Thyroid gland (tissue), 4 donors: ENCODE measurements at regions of chr6 and their contacts with region 1.

Region 1: GRCh38 chr6:46407776-46408530 is 83.3 kb downstream of the RCAN2 start:
- DNase-seq: no peak
- H3K4me3 ChIP-seq: no peak overlapping the region
- H3K27ac ChIP-seq: no peak overlapping the region
- H3K4me1 ChIP-seq: no peaks in the 10 kb centered on the region
- H3K27me3 ChIP-seq: no peaks in the 10 kb centered on the region
- CTCF ChIP-seq: no peak
- POLR2A ChIP-seq: no peak

Region 2: GRCh38 chr6:46221222-46221793 is 186.6 kb before region 1 on chr6:
- intact Hi-C with region 1: loop called (anchors 5 kb)
- DNase-seq: peak in 1 of 2 donors; percentile 2
- H3K4me3 ChIP-seq: no peak overlapping the region
- H3K27ac ChIP-seq: no peak overlapping the region
- H3K4me1 ChIP-seq: peaks cover 7 to 8% of the 10 kb centered on the region in 2 donors
- H3K27me3 ChIP-seq: no peaks in the 10 kb centered on the region
- CTCF ChIP-seq: peak; percentile 51 to 95 (median 77)
- POLR2A ChIP-seq: no peak

Region 3: GRCh38 chr6:46484081-46484820 is 76.3 kb after region 1 on chr6:
- intact Hi-C with region 1: no loop called
- DNase-seq: no peak
- H3K4me3 ChIP-seq: no peak overlapping the region
- H3K27ac ChIP-seq: no peak overlapping the region
- H3K4me1 ChIP-seq: no peaks in the 10 kb centered on the region
- H3K27me3 ChIP-seq: no peaks in the 10 kb centered on the region
- CTCF ChIP-seq: no peak
- POLR2A ChIP-seq: no peak

Region 4: DNA sequence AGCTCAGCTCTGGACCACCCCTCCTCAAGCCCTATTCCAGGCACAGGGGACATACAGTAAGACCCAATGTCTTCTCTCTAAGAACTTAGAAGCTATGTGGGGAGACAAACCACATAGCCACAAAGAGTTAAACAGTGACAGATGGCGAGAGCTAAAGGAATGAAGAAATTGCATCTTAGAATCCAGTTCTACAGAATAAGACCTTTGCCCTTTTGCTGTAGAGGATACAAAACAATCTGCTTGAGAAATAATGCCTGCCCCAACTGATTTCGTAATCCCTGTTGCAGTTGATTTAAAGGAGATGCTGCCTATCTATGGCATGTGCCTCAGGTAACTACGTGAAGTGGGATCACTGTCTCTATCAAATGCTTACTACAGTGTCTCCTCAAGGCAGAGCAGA is 870.6 kb after region 1 on chr6:
- intact Hi-C with region 1: no loop called
- DNase-seq: no peak
- H3K4me3 ChIP-seq: no peak overlapping the region
- H3K27ac ChIP-seq: no peak overlapping the region
- H3K4me1 ChIP-seq: peaks cover 4 to 9% of the 10 kb centered on the region in 2 donors
- H3K27me3 ChIP-seq: no peaks in the 10 kb centered on the region
- CTCF ChIP-seq: no peak
- POLR2A ChIP-seq: no peak